ENCODE measurements at regions of chr3 and their contacts with region 1.

Region 1: DNA sequence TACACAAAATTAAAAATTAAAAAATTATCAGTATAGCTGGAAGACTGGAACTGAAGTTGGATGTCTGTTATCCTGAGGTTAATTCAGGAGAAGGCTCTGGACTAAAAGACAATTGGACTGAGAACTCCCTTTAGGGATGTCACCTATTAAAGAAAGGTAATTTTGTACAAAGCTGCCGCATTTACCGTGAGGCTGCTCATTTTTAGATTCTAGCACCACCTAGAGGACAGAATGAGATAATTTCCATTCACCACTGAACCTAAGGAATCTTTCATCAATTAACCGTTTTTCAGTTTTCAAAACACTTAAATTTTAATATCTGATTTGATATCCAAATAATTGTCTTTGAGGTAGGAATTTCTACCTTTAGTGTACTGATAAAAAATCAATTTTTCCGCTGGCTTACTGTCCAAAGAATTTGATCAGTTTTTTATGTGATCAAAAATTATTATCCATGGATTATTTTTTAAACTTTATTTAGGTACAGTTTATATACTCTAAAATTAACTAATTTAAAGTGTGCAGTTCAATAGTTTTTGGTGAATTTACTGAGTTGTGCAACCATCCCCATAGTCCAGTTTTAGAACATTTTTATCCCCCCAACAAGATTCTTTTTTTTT is 106.7 kb upstream of the TNIK start:
- DNase-seq: peak; percentile 15
- ATAC-seq: peak; percentile 77; the same call in 1 of the 2 replicates
- H3K4me3 ChIP-seq: no peak overlapping the region
- H3K27ac ChIP-seq: no peak overlapping the region
- H3K4me1 ChIP-seq: no peaks in the 10 kb centered on the region
- H3K27me3 ChIP-seq: no peaks in the 10 kb centered on the region; the same call in 1 of the 2 replicates
- CTCF ChIP-seq: peak; percentile 80; the same call in 1 of the 2 replicates

Region 2: GRCh38 chr3:170896781-170897180 is 670.1 kb before region 1 on chr3:
- CTCF ChIA-PET with region 1: interaction called, 10 read pairs
- POLR2A ChIA-PET with region 1: no interaction called
- in situ Hi-C with region 1: no loop called
- intact Hi-C with region 1: no loop called
- DNase-seq: no peak
- ATAC-seq: no peak
- H3K4me3 ChIP-seq: no peak overlapping the region
- H3K27ac ChIP-seq: no peak overlapping the region
- H3K4me1 ChIP-seq: no peaks in the 10 kb centered on the region
- H3K27me3 ChIP-seq: no peaks in the 10 kb centered on the region
- CTCF ChIP-seq: no peak

Region 3: GRCh38 chr3:170961616-170962400 is 605.1 kb before region 1 on chr3:
- CTCF ChIA-PET with region 1: interaction called, 4 read pairs
- POLR2A ChIA-PET with region 1: no interaction called
- in situ Hi-C with region 1: no loop called
- intact Hi-C with region 1: loop called (anchors 5 kb)
- DNase-seq: peak; percentile 15
- ATAC-seq: 0 out of 2 replicates have a peak, but pooled peaks have one; percentile 48
- H3K4me3 ChIP-seq: no peak overlapping the region
- H3K27ac ChIP-seq: no peak overlapping the region
- H3K4me1 ChIP-seq: no peaks in the 10 kb centered on the region
- H3K27me3 ChIP-seq: no peaks in the 10 kb centered on the region
- CTCF ChIP-seq: peak; percentile 72

Region 4: GRCh38 chr3:171049861-171050444 is 517.0 kb before region 1 on chr3:
- CTCF ChIA-PET with region 1: no interaction called
- POLR2A ChIA-PET with region 1: no interaction called
- in situ Hi-C with region 1: no loop called
- intact Hi-C with region 1: loop called (anchors 5 kb)
- DNase-seq: no peak
- ATAC-seq: peak; percentile 96
- H3K4me3 ChIP-seq: no peak overlapping the region
- H3K27ac ChIP-seq: no peak overlapping the region
- H3K4me1 ChIP-seq: no peaks in the 10 kb centered on the region
- H3K27me3 ChIP-seq: no peaks in the 10 kb centered on the region
- CTCF ChIP-seq: peak; percentile 86

Region 5: DNA sequence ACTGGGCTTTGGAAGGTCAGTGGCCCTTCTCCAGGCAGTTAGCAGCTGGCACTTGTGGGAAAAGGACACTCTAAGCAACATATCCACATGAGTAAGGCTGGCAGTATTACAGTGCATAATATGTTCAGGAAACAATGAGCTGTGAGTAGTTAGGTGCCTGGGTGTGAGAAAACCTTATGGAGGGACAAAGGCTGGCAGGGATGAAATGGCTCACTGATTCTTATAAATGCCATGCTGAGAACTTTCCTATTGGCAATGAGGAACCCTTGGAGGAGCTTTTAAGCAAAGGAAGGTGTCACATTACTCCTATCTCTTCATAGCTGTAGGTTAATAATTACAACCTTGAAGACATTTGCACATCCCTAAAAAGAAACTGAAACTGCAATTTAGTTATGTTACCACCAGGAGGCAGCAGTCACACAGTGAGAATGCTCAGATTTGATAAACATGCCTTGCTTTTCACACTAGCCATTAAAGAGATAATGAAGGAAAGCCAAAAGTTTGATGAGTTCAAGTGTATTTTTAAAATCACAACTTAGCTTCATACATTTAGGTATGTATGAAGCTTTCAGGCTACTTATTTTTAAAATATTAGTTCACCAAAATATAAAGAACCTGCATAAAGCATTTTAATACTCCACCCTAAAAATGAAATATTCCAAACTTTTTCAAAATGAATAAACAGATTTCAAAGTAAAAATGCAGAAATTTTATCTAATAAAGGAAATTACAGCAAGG is 403.8 kb before region 1 on chr3:
- CTCF ChIA-PET with region 1: no interaction called
- POLR2A ChIA-PET with region 1: no interaction called
- in situ Hi-C with region 1: no loop called
- intact Hi-C with region 1: loop called (anchors 1 kb)
- DNase-seq: no peak
- ATAC-seq: no peak
- H3K4me3 ChIP-seq: no peak overlapping the region
- H3K27ac ChIP-seq: no peak overlapping the region
- H3K4me1 ChIP-seq: no peaks in the 10 kb centered on the region
- H3K27me3 ChIP-seq: no peaks in the 10 kb centered on the region
- CTCF ChIP-seq: peak; percentile 76

Region 6: DNA sequence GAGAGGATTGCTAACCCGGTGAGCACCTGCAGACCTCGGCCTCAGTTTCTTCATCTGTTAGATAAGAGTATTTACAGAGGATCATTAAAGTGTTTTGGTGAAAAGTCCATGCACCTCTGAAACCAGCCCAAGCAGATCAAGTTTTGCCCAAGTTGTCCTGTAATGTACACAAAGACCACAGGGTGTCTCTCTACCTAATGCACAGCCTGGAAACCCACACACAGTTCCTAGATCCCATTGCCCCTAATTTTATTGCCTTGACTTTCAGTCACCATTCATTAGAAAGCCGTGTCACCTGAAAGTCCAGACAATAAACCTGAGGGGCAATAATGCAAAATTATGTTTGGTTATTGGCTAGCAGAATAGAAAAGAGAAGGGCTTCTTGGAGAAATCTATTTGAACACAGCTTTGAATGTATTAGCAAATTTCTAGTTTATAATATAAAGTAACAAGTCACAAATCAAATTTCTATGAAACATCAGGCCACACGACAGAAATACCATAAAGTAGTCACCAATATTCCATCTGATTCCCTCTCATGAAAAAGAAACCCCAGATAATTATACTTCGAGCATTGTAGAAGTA is 379.1 kb before region 1 on chr3:
- CTCF ChIA-PET with region 1: interaction called, 3 read pairs
- POLR2A ChIA-PET with region 1: no interaction called
- in situ Hi-C with region 1: no loop called
- intact Hi-C with region 1: loop called (anchors 1 kb)
- DNase-seq: no peak
- ATAC-seq: peak; percentile 88
- H3K4me3 ChIP-seq: no peak overlapping the region
- H3K27ac ChIP-seq: no peak overlapping the region
- H3K4me1 ChIP-seq: no peaks in the 10 kb centered on the region
- H3K27me3 ChIP-seq: no peaks in the 10 kb centered on the region; the same call in 1 of the 2 replicates
- CTCF ChIP-seq: peak; percentile 80

Region 7: GRCh38 chr3:171218069-171218468 is 348.8 kb before region 1 on chr3:
- CTCF ChIA-PET with region 1: no interaction called
- POLR2A ChIA-PET with region 1: no interaction called
- in situ Hi-C with region 1: no loop called
- intact Hi-C with region 1: no loop called
- DNase-seq: no peak
- ATAC-seq: no peak
- H3K4me3 ChIP-seq: no peak overlapping the region
- H3K27ac ChIP-seq: no peak overlapping the region
- H3K4me1 ChIP-seq: no peaks in the 10 kb centered on the region
- H3K27me3 ChIP-seq: peaks cover 3% of the 10 kb centered on the region; the same call in 1 of the 2 replicates
- CTCF ChIP-seq: no peak

Region 8: GRCh38 chr3:171829841-171830517 is 263.1 kb after region 1 on chr3:
- CTCF ChIA-PET with region 1: interaction called, 5 read pairs
- POLR2A ChIA-PET with region 1: no interaction called
- in situ Hi-C with region 1: no loop called
- intact Hi-C with region 1: loop called (anchors 5 kb)
- DNase-seq: peak; percentile 69
- ATAC-seq: peak; percentile 99
- H3K4me3 ChIP-seq: no peak overlapping the region
- H3K27ac ChIP-seq: peak overlapping the region; percentile 20; the same call in 1 of the 2 replicates
- H3K4me1 ChIP-seq: peaks cover 28% of the 10 kb centered on the region
- H3K27me3 ChIP-seq: no peaks in the 10 kb centered on the region
- CTCF ChIP-seq: peak; percentile 95